H1 (cell line): ENCODE measurements at regions of chr1 and their contacts with region 1.

Region 1: DNA sequence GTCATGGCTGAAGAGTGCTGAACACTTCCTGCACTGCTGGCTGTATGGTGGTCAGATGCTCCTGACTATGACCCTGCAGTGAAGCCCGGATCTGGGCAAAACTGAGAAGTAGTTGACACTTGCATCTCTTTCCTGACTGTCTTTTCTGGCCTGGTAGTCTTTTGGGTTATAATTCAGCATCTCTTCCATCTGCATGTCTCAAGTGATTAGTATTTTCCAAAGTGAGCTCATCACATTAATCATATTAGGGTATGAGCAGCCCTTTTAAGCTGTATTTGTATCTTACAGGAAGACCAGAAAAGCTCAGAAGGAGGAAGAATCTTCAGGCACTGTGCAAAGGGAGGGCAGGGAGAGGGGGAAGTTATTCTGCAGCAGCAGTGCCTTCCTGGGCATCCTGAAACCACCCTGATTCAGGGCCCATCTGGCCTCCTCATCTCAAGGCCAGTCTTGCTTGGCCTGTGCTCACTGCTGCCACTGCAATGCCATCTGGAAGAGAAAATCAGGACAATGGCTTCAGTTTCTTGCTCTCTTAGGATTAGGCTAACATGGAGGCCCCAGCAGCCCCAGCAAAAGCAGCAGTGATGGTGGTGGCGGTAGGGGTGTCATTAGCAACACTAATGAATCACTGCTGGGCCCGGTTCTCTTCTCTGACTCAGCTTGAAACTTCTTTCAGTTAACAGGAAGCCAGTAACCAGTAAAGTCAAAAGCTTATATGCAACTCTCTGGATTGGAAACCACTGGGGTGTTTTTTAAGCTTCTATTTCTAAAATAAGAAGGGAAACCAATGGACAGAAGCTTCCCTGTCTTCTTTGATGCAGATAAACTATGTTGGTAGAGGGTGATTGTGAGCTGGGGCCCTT is 63.3 kb upstream of the WDR26 start:
- DNase-seq: no peak
- H3K4me3 ChIP-seq: peak overlapping the region in 2 of 4 experiments; percentile 0 to 2; a peak in 2 of 8 replicates
- H3K27ac ChIP-seq: peak overlapping the region; percentile 92
- H3K4me1 ChIP-seq: peaks cover 21 to 35% (median 24%) of the 10 kb centered on the region in 4 experiments
- H3K27me3 ChIP-seq: no peaks in the 10 kb centered on the region
- CTCF ChIP-seq: peak in 1 of 3 experiments; percentile 18; a peak in 1 of 4 replicates
- EP300 ChIP-seq: no peak
- POLR2A ChIP-seq: peak in 1 of 2 experiments; percentile 44; a peak in 1 of 3 replicates
- RAD21 ChIP-seq: no peak; a peak in 1 of 4 replicates

Region 2: GRCh38 chr1:224434691-224435317 is 63.1 kb before region 1 on chr1 and contains the start of gene WDR26:
- CTCF ChIA-PET with region 1: no interaction called
- POLR2A ChIA-PET with region 1: interaction called, 15 read pairs
- DNase-seq: peak in 1 of 2 experiments; percentile 84
- H3K4me3 ChIP-seq: peak within 1 kb of the TSS; percentile 37 to 93 (median 83)
- H3K27ac ChIP-seq: no peak within 1 kb of the TSS
- H3K4me1 ChIP-seq: peaks cover 0 to 12% (median 1%) of the 10 kb centered on the region in 4 experiments; a peak in 4 of 7 replicates
- H3K27me3 ChIP-seq: no peaks in the 10 kb centered on the region
- CTCF ChIP-seq: no peak
- EP300 ChIP-seq: no peak
- POLR2A ChIP-seq: peak; percentile 70 to 78; a peak in 2 of 3 replicates
- RAD21 ChIP-seq: no peak
- total RNA-seq, gene WDR26: 65.5 and 72.5 TPM in 2 replicates

Region 3: GRCh38 chr1:224521904-224522734 is 24.2 kb after region 1 on chr1:
- CTCF ChIA-PET with region 1: no interaction called
- POLR2A ChIA-PET with region 1: no interaction called
- DNase-seq: no peak
- H3K4me3 ChIP-seq: no peak overlapping the region
- H3K27ac ChIP-seq: no peak overlapping the region
- H3K4me1 ChIP-seq: no peaks in the 10 kb centered on the region
- H3K27me3 ChIP-seq: no peaks in the 10 kb centered on the region
- CTCF ChIP-seq: peak in 1 of 3 experiments; percentile 24; a peak in 1 of 4 replicates
- EP300 ChIP-seq: no peak
- POLR2A ChIP-seq: no peak
- RAD21 ChIP-seq: 0 out of 4 replicates have a peak, but pooled peaks of 1 of the 2 experiments have one; percentile 9